ENCODE measurements at regions of chr2 and their contacts with region 1.

Region 1: GRCh38 chr2:177164584-177165052 is 48.0 kb upstream of the HNRNPA3 start:
- DNase-seq: peak; percentile 70 to 76 (median 74)
- H3K4me3 ChIP-seq: no peak overlapping the region
- H3K4me3 Mint-ChIP-seq: no peak overlapping the region
- H3K27ac ChIP-seq: no peak overlapping the region
- H3K27ac Mint-ChIP-seq: no peak overlapping the region
- H3K4me1 ChIP-seq: peaks cover 25% of the 10 kb centered on the region
- H3K4me1 Mint-ChIP-seq: peaks cover 7 to 19% (median 12%) of the 10 kb centered on the region in 4 donors
- H3K27me3 ChIP-seq: no peaks in the 10 kb centered on the region
- H3K27me3 Mint-ChIP-seq: peaks cover 2 to 5% of the 10 kb centered on the region in 2 donors

Region 2: GRCh38 chr2:177148477-177149154 is 16.0 kb before region 1 on chr2:
- CTCF ChIA-PET with region 1: interaction called, 49 read pairs
- POLR2A ChIA-PET with region 1: interaction called, 11 read pairs
- intact Hi-C with region 1: loop called (anchors 1 kb)
- DNase-seq: peak; percentile 66 to 76 (median 71)
- H3K4me3 ChIP-seq: peak overlapping the region; percentile 53 to 73
- H3K4me3 Mint-ChIP-seq: peak overlapping the region; percentile 85 to 94 (median 90)
- H3K27ac ChIP-seq: peak overlapping the region; percentile 19
- H3K27ac Mint-ChIP-seq: peak overlapping the region in 6 of 7 donors; percentile 31 to 83 (median 58)
- H3K4me1 ChIP-seq: peaks cover 11% of the 10 kb centered on the region
- H3K4me1 Mint-ChIP-seq: peaks cover 6 to 12% (median 12%) of the 10 kb centered on the region in 4 donors
- H3K27me3 ChIP-seq: peaks cover 15% of the 10 kb centered on the region
- H3K27me3 Mint-ChIP-seq: peaks cover 14 to 19% of the 10 kb centered on the region in 2 donors

Region 3: GRCh38 chr2:177212106-177212890 is 47.7 kb after region 1 on chr2 and contains the start of gene HNRNPA3:
- CTCF ChIA-PET with region 1: interaction called, 24 read pairs
- POLR2A ChIA-PET with region 1: interaction called, 34 read pairs
- intact Hi-C with region 1: loop called (anchors 1 kb)
- DNase-seq: peak; percentile 99 to 100 (median 100)
- H3K4me3 ChIP-seq: peak within 1 kb of the TSS; percentile 98 to 99
- H3K4me3 Mint-ChIP-seq: peak within 1 kb of the TSS; percentile 86 to 98 (median 95)
- H3K27ac ChIP-seq: peak within 1 kb of the TSS; percentile 100
- H3K27ac Mint-ChIP-seq: peak within 1 kb of the TSS; percentile 98 to 100 (median 99)
- H3K4me1 ChIP-seq: peaks cover 55% of the 10 kb centered on the region
- H3K4me1 Mint-ChIP-seq: peaks cover 26 to 66% (median 38%) of the 10 kb centered on the region in 4 donors
- H3K27me3 ChIP-seq: no peaks in the 10 kb centered on the region
- H3K27me3 Mint-ChIP-seq: no peaks in the 10 kb centered on the region
- total RNA-seq, gene HNRNPA3: 172 to 175 TPM

Region 4: DNA sequence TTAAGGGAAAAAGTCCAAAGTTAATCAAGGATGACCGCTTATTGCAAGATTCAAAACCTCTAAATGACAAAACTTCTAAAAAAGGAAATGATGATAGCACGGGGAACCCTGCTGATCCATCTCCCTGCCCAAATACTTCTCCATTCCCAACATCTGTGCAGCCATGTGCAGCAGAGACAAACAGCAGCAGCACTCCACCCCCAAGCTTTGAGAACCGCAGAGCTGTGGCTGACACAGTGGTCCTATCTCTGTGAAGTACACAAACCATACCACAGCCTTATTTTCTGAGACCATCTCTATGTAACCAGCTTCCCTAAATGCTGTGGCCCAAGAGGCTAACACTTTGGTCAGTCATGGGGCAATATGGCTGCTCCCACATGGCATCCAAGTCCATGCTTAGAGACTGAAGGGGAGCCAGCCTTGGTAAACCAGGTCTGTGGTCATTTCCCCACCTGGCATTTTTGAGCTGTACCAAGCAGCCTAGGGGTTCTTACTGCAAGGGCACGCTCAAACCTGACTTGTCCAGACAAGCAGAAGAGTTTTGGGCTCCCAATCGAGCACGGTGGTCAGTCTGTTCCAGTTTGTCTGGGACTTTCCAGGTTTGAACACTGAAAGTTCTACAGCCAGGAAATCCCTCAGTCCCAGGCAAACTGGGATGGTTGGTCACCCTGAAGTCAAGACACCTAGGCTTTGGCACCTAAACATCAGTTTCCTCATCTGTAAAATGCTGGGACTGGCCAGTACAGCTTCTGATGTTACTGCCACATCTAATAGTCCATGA is 117.0 kb after region 1 on chr2:
- CTCF ChIA-PET with region 1: interaction called, 13 read pairs
- POLR2A ChIA-PET with region 1: no interaction called
- intact Hi-C with region 1: no loop called
- DNase-seq: no peak
- H3K4me3 ChIP-seq: no peak overlapping the region
- H3K4me3 Mint-ChIP-seq: no peak overlapping the region
- H3K27ac ChIP-seq: no peak overlapping the region
- H3K27ac Mint-ChIP-seq: peak overlapping the region in 1 of 7 donors; percentile 53
- H3K4me1 ChIP-seq: no peaks in the 10 kb centered on the region
- H3K4me1 Mint-ChIP-seq: no peaks in the 10 kb centered on the region
- H3K27me3 ChIP-seq: no peaks in the 10 kb centered on the region
- H3K27me3 Mint-ChIP-seq: no peaks in the 10 kb centered on the region

Region 5: GRCh38 chr2:177314194-177314593 is 149.6 kb after region 1 on chr2:
- CTCF ChIA-PET with region 1: interaction called, 28 read pairs
- POLR2A ChIA-PET with region 1: interaction called, 11 read pairs
- intact Hi-C with region 1: no loop called
- DNase-seq: no peak
- H3K4me3 ChIP-seq: no peak overlapping the region
- H3K4me3 Mint-ChIP-seq: no peak overlapping the region
- H3K27ac ChIP-seq: no peak overlapping the region
- H3K27ac Mint-ChIP-seq: no peak overlapping the region
- H3K4me1 ChIP-seq: peaks cover 17% of the 10 kb centered on the region
- H3K4me1 Mint-ChIP-seq: peaks cover 10 to 24% (median 15%) of the 10 kb centered on the region in 4 donors
- H3K27me3 ChIP-seq: no peaks in the 10 kb centered on the region
- H3K27me3 Mint-ChIP-seq: no peaks in the 10 kb centered on the region

Region 6: GRCh38 chr2:177419274-177419673 is 254.7 kb after region 1 on chr2:
- CTCF ChIA-PET with region 1: interaction called, 75 read pairs
- POLR2A ChIA-PET with region 1: interaction called, 6 read pairs
- intact Hi-C with region 1: loop called (anchors 1 kb)
- DNase-seq: no peak
- H3K4me3 ChIP-seq: no peak overlapping the region
- H3K4me3 Mint-ChIP-seq: no peak overlapping the region
- H3K27ac ChIP-seq: no peak overlapping the region
- H3K27ac Mint-ChIP-seq: no peak overlapping the region
- H3K4me1 ChIP-seq: peaks cover 5% of the 10 kb centered on the region
- H3K4me1 Mint-ChIP-seq: peaks cover 8 to 20% (median 18%) of the 10 kb centered on the region in 4 donors
- H3K27me3 ChIP-seq: no peaks in the 10 kb centered on the region
- H3K27me3 Mint-ChIP-seq: no peaks in the 10 kb centered on the region

Region 7: GRCh38 chr2:177763532-177764265 is 599.1 kb after region 1 on chr2:
- CTCF ChIA-PET with region 1: interaction called, 37 read pairs
- POLR2A ChIA-PET with region 1: interaction called, 4 read pairs
- intact Hi-C with region 1: loop called (anchors 1 kb)
- DNase-seq: peak; percentile 60 to 74 (median 70)
- H3K4me3 ChIP-seq: no peak overlapping the region
- H3K4me3 Mint-ChIP-seq: peak overlapping the region in 3 of 8 donors; percentile 14 to 24 (median 22)
- H3K27ac ChIP-seq: no peak overlapping the region
- H3K27ac Mint-ChIP-seq: no peak overlapping the region
- H3K4me1 ChIP-seq: peaks cover 5% of the 10 kb centered on the region
- H3K4me1 Mint-ChIP-seq: peaks cover 0 to 6% (median 3%) of the 10 kb centered on the region in 4 donors
- H3K27me3 ChIP-seq: peaks cover 6% of the 10 kb centered on the region
- H3K27me3 Mint-ChIP-seq: peaks cover 4 to 12% of the 10 kb centered on the region in 2 donors